ENCODE measurements at regions of chr2 and their contacts with region 1.

Region 1: DNA sequence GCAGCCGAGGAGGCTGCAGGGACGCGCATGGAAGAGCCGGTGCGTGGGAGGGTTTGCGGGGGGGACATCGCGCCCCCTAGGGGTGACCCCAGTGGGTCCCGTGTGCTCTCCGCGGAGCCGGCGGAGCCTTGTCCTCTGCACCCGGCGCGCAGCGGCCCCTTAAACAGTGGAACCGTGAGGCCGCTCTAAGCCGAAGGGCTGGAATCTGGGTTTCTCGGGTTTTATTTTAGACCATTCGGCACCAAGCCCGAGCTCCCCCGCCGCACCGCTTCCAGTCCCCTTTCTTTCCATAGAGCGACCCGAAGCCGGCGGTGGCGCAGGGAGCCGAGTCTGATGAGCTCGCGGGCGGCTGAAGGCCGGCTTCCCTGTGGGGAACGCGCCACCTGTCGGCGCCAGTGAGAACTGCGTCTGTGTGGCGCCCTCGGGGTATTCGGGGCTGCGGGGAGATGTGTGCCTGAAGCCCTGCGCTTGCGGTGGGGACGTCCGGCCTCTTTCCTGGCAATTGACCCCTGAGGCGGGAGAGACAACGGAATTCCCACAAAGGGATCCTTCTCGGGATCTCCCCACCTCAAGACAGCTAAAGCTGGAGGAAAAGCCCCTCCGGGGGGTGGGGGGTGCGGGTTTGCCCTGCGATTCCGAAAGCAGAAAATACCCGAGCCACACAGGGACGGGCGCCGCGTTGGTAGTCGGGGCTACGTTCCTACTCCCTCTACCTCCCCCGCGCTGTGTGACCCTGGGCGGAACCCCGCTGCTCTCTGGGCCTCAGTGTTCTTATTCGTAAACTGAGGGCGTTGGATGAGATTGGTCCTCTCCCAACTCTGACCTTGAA is 8.2 kb upstream of the EN1 start:
- DNase-seq: peak; percentile 76
- H3K4me3 Mint-ChIP-seq: peak overlapping the region; percentile 33
- H3K27ac Mint-ChIP-seq: no peak overlapping the region
- H3K4me1 Mint-ChIP-seq: peaks cover 2% of the 10 kb centered on the region
- H3K27me3 Mint-ChIP-seq: peaks cover 81% of the 10 kb centered on the region

Region 2: DNA sequence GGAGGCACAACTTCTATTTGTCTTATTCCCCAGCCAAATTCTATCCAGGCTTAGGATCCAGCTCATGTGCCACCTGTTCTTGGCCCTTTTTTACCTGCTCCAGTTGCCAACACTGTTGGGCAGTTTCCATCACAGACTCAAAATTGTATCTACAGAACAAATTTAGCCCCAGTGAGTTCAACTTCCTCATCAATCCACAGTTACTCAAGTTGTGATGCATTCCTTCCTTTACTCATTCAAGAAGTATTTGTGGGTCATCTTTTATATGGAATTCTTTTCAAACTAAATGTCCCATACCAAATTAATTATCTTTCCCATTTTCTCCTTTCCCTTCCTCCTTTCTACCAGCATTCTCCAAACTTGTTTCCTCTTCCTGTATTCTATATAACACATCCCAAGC is 1053.8 kb before region 1 on chr2:
- intact Hi-C with region 1: no loop called
- DNase-seq: no peak
- H3K4me3 Mint-ChIP-seq: no peak overlapping the region
- H3K27ac Mint-ChIP-seq: no peak overlapping the region
- H3K4me1 Mint-ChIP-seq: peaks cover 5% of the 10 kb centered on the region
- H3K27me3 Mint-ChIP-seq: peaks cover 23% of the 10 kb centered on the region

Region 3: DNA sequence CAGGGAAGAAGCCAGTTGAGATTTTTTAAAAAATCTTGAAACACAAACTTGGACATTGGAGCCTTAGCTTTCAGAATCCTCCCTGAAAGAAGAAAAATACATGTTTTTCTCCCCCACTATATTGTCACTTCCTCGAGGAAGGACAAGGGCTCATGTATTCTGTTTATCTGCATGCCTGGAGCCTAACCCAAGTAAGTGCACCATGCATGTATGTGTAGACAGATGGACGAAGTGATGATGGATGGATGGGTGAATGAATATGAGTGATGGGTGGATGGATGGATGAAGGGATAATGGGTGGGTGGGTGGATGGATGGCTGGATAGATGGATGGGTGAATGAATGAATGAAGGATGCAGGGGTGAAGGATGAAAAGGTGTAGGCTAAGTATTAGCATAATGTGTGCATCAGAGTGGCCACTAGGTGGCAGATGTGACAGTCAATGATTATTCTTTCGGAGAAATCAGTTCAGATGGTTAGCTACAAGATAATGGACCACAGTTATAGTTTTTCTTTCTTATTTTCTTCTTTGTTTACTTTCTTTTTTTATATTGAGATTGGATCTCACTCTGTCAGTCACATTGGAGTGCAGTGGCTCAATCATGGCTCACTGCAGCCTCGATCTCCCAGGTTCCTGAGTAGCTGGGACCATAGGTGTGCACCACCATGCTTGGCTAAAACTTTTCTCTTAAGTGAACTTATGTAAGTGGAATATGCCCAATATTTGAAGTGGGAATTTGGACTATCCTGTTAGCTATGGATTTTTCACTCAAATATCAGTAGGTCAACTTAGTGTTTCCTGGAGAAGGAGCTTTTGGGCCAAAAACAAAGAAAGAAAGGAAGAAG is 823.3 kb before region 1 on chr2:
- intact Hi-C with region 1: loop called (anchors 5 kb)
- DNase-seq: peak; percentile 14
- H3K4me3 Mint-ChIP-seq: no peak overlapping the region
- H3K27ac Mint-ChIP-seq: no peak overlapping the region
- H3K4me1 Mint-ChIP-seq: no peaks in the 10 kb centered on the region
- H3K27me3 Mint-ChIP-seq: peaks cover 31% of the 10 kb centered on the region

Region 4: GRCh38 chr2:118221666-118222594 is 633.7 kb before region 1 on chr2:
- intact Hi-C with region 1: loop called (anchors 1 kb)
- DNase-seq: no peak
- H3K4me3 Mint-ChIP-seq: no peak overlapping the region
- H3K27ac Mint-ChIP-seq: no peak overlapping the region
- H3K4me1 Mint-ChIP-seq: peaks cover 19% of the 10 kb centered on the region
- H3K27me3 Mint-ChIP-seq: peaks cover 65% of the 10 kb centered on the region

Region 5: DNA sequence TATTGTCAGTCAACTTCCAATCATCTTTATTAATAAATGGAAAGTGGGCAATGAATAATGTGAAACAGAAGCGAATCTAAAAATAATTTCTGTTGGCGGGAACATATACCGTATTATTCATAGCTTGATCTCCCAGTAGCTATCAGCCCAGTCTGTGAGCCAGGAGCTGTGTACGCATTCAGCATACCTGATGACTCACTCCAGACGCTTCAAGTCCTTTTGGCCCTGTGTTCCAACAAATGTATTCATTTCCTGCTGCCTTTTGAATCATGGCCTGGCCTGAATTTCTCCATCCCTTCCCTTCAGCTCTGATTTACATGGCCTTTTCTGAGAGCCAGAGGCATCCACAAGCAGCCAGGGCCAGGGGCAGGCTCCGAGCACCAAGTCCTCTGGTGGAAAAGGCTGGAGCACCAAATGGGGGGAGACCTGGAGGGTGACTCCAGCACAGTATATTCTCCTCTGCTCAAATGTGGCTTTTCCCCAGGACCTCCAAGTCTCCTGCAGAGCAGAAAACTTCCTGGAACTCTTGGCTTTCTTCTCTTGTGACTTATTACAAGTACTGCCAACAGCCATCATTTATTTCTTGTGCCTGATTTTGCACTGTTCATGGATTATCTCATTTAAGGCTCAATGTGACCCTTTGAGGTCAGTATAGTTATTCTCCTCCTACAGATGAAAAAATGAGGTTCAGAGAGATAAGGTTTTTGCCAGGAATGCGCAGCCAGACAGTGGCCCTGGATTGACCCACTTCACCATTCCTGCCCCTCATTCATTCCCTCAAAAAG is 116.9 kb before region 1 on chr2:
- intact Hi-C with region 1: no loop called
- DNase-seq: no peak
- H3K4me3 Mint-ChIP-seq: no peak overlapping the region
- H3K27ac Mint-ChIP-seq: no peak overlapping the region
- H3K4me1 Mint-ChIP-seq: no peaks in the 10 kb centered on the region
- H3K27me3 Mint-ChIP-seq: no peaks in the 10 kb centered on the region

Region 6: DNA sequence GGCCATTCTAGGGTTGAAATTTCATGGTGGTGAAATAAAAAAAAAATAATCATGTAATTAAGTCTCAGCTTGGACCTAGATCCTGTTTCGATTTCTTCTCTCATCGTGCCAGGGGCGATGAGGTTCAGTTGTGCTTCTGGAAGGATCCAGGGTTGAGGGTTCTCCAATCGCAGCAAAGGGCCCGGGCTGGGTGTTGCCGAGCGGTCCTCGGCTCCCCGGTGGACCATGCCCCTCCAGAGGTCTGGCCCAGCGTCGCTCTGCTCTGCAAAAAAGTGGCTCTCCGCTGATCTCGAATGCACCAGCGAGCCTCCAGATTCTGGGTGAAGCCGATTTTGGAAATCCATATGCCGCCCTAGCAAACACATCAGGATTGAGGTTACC is 47.2 kb before region 1 on chr2:
- intact Hi-C with region 1: no loop called
- DNase-seq: no peak
- H3K4me3 Mint-ChIP-seq: no peak overlapping the region
- H3K27ac Mint-ChIP-seq: no peak overlapping the region
- H3K4me1 Mint-ChIP-seq: no peaks in the 10 kb centered on the region
- H3K27me3 Mint-ChIP-seq: peaks cover 46% of the 10 kb centered on the region

Region 7: DNA sequence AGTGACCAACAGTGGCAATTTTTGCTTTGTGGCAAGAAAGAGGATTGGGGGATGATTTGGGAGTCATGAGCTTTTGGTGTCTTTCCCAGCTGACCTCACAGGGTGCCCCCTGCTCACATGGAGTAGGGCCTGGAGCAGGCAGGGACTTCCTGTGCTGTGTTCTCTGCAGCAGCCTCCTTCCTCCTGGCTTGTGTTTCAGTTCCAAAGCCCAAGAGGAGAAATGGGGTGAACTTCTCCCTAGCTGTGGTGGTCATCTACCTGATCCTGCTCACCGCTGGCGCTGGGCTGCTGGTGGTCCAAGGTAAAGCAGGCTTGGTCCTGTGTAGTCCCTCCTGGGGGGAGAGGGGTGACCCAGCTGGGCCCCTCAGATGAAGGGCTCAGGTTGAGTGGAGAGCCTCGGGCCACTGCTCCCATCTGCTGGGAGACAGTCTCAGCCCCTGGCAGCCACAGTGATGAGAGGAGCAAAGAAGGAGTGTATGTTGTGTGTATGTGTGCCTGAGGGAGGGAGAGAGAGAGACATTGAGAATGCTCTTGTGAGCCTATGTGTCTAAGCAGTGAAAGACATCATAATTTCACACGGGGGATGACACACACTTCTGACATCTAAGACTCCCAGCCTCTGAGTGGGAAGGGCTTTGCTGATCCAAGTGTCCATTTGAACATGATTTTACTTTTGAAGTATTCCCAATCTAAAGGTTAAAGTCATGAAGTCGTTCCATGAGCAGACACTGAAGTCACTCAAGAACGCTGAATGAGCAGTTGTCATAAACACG is 113.5 kb after region 1 on chr2:
- intact Hi-C with region 1: no loop called
- DNase-seq: no peak
- H3K4me3 Mint-ChIP-seq: no peak overlapping the region
- H3K27ac Mint-ChIP-seq: no peak overlapping the region
- H3K4me1 Mint-ChIP-seq: no peaks in the 10 kb centered on the region
- H3K27me3 Mint-ChIP-seq: no peaks in the 10 kb centered on the region